Vagina (tissue), 2 donors: ENCODE measurements at regions of chr3 and their contacts with region 1.

Region 1: DNA sequence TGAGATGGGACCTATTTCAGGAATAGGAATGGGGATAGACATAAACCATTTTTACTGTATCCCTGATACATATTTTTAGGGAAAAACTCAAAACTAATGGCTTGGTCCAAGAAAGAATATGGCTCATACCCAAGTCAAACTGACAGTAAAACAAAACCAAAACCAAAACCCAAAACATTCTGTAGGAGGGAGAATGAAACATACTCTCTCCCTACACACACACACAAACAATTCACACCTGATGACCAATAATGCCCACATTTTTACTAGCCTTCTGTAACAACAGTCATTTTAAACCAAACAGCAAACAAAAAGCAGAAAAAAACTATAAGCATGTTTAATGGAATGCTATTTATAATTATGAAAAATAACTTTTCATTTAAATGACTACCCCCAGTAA is 74.9 kb downstream of the NBEAL2 start:
- DNase-seq: no peak
- H3K4me3 ChIP-seq: no peak overlapping the region
- H3K27ac ChIP-seq: no peak overlapping the region
- H3K4me1 ChIP-seq: peaks cover 8% of the 10 kb centered on the region
- H3K27me3 ChIP-seq: no peaks in the 10 kb centered on the region
- CTCF ChIP-seq: no peak
- POLR2A ChIP-seq: no peak

Region 2: DNA sequence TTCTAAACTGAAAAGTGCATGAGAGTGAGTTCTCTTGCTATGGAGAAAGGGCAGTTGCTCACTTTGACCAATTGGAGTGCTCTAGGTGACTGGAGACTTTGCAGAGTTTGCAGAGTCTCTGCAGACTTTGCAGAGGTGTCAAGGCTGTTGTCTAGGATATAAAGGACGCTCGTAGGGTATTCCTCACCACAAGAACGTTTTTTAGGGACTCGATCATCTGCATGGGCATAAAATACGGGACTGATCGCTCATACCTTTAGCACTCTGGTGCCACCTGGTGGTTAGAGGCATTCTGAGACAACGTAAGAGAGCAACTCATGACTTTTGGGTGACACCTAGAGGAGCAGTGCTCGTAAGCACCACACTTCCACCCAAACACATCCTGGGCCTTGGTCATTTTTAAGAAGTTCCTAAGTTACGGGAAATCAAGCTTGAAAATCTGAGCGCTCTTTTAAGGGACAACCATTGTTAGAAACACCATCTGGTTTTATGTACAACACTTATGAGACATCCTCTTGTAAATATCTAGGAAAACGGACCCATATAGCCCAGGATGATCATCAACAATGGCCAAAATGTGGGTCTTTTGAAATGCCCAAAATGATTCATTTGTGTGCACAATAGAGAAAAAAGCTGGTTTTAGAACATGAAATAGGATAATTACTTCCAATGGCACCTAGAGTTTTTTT is 975.6 kb before region 1 on chr3:
- intact Hi-C with region 1: no loop called
- DNase-seq: peak; percentile 74 to 92
- H3K4me3 ChIP-seq: peak overlapping the region in 1 of 2 donors; percentile 4
- H3K27ac ChIP-seq: peak overlapping the region; percentile 51
- H3K4me1 ChIP-seq: peaks cover 36% of the 10 kb centered on the region
- H3K27me3 ChIP-seq: no peaks in the 10 kb centered on the region
- CTCF ChIP-seq: peak; percentile 96 to 99 (median 98)
- POLR2A ChIP-seq: no peak

Region 3: GRCh38 chr3:46874430-46874829 is 180.0 kb before region 1 on chr3:
- intact Hi-C with region 1: loop called (anchors 5 kb)
- DNase-seq: no peak
- H3K4me3 ChIP-seq: no peak overlapping the region
- H3K27ac ChIP-seq: peak overlapping the region; percentile 17
- H3K4me1 ChIP-seq: peaks cover 35% of the 10 kb centered on the region
- H3K27me3 ChIP-seq: no peaks in the 10 kb centered on the region
- CTCF ChIP-seq: no peak
- POLR2A ChIP-seq: no peak

Region 4: DNA sequence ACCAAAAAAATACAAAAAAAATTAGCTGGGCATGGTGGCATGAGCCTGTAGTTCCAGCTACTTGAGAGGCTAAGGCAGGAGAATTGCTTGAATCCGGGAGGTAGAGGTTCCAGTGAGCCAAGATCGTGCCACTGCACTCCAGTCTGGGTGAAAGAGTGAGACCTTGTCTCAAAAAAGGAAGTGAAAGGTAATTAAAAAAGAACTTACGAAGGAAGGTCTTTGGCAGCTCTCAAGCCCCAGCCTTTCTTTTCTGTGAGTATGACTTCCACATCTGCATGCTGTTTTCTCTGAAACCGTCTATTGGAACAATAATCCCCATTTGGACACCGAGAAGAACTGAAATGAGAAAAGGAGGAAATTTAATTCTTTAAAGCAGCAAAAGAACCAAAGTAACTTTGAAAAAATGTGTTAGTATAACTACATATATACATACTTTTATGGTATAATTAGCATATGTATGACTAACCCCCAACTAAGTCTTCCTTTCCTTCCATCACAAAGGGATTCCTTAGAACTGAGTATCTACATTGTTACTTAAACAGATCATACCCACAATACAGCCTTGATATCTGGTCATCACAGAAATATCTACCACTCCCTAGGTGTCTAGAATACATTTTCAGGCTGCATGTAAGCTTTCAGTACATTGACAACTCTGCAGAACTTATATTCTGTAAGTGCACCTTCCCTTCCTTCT is 59.4 kb after region 1 on chr3:
- intact Hi-C with region 1: no loop called
- DNase-seq: no peak
- H3K4me3 ChIP-seq: no peak overlapping the region
- H3K27ac ChIP-seq: no peak overlapping the region
- H3K4me1 ChIP-seq: no peaks in the 10 kb centered on the region
- H3K27me3 ChIP-seq: no peaks in the 10 kb centered on the region
- CTCF ChIP-seq: no peak
- POLR2A ChIP-seq: no peak

Region 5: DNA sequence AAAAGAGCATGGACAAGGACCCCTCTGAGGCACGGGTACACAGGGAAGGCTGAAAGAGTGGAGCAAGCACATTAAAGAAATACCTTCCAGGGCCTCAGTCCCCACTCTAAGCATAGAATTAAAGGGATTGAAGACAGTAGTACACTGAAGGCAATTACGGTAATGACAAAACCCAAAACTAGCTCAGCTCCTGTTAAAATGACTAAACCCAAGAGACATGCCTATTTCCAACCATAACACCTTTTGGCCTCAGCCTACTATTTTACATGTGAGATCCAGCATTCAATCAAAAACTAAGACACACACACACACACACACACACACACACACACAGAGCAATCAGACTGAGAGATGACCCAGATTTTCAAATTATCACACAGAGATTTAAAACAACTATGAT is 942.0 kb after region 1 on chr3:
- intact Hi-C with region 1: no loop called
- DNase-seq: no peak
- H3K4me3 ChIP-seq: no peak overlapping the region
- H3K27ac ChIP-seq: no peak overlapping the region
- H3K4me1 ChIP-seq: peaks cover 31% of the 10 kb centered on the region
- H3K27me3 ChIP-seq: no peaks in the 10 kb centered on the region
- CTCF ChIP-seq: no peak
- POLR2A ChIP-seq: no peak